OCI-LY7 (cell line): ENCODE measurements at regions of chr11 and their contacts with region 1.

Region 1: DNA sequence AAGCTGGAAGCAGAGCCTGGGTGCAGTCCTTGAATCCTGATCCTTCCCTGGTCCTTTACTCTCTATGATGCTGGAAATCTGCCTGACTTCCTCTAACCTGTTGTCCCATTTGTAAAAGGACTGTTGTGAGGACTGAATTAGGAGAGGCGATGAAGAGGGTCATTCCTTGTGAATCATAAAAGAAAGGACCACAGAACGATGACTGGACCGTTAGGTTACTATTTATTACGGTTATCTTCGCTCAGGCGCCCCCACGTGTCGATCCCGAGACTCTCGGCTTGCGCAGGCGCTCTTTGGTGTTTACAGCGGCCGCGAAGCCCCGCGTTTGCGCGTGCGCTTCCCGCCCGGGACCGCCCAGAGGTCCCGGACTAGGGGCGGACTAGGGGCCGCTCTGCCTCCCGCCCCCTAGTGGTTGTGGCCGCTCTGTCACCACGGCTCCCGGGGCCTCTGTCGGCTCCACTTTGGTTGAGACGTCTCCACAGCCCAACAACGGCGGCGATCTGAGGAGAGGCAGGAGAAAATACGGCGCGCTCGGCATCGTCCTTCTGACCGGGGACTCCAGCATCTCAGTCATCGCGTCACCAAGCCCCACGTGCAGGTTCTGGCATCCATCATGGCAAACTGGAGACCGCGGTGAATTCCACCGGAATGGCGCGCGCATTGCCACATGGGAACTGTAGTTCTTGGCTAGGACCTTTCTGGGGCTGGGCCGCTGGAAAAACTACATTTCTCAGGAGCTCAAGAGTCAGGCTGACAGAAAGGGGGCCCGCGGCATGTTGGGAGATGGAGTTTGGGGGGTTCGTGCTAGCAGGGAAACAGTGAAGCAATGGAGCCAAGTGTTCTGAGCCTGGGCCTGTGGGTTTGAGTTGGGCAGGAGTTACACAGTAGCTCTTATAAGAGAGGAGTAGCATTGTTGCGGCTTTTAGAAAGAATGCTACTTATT is at the start of gene STARD10:
- DNase-seq: peak; percentile 98
- H3K4me3 ChIP-seq: peak within 1 kb of the TSS; percentile 70
- H3K27ac ChIP-seq: peak within 1 kb of the TSS; percentile 68
- H3K4me1 ChIP-seq: peaks cover 30% of the 10 kb centered on the region
- CTCF ChIP-seq: peak; percentile 99
- total RNA-seq, gene STARD10: 8.1 and 12.9 TPM in 2 replicates

Region 2: GRCh38 chr11:72724851-72725730 is 68.6 kb before region 1 on chr11:
- CTCF ChIA-PET with region 1: interaction called, 6 read pairs
- POLR2A ChIA-PET with region 1: interaction called, 13 read pairs
- intact Hi-C with region 1: loop called (anchors 1 kb)
- DNase-seq: peak; percentile 90
- H3K4me3 ChIP-seq: no peak overlapping the region
- H3K27ac ChIP-seq: no peak overlapping the region
- H3K4me1 ChIP-seq: peaks cover 34% of the 10 kb centered on the region
- CTCF ChIP-seq: peak; percentile 97

Region 3: DNA sequence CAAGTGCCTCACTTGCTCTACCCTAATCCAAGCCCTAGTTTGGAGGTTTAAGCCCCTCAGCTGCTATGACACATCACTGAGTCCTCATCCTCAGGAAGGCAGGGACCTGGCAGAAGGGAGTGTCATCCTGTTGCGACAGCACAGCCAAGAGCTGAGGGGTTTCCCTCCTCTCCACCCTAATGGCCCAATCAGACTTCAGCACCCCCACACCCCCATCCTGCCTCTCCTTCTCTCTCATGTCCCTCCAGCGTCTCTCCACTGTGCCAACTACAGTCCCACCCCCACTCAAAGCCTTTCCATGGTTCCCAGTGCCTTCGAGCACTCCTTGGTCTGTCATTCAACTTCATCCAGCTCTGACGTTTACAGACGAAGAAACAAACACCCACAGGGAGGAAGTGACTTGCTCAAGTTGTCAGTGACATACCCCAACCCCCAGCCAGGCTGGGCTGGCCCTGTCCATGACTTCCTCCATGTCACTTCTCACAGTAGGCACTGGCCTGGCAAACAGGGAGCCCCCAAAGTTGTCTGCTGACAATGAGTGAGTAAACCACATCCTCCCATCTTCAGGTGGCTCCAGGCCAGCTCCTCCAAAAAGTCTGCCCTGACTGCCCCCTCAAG is 57.1 kb before region 1 on chr11:
- CTCF ChIA-PET with region 1: interaction called, 4 read pairs
- POLR2A ChIA-PET with region 1: interaction called, 13 read pairs
- intact Hi-C with region 1: no loop called
- DNase-seq: peak; percentile 69
- H3K4me3 ChIP-seq: peak overlapping the region; percentile 34
- H3K27ac ChIP-seq: peak overlapping the region; percentile 63
- H3K4me1 ChIP-seq: peaks cover 56% of the 10 kb centered on the region
- CTCF ChIP-seq: no peak

Region 4: DNA sequence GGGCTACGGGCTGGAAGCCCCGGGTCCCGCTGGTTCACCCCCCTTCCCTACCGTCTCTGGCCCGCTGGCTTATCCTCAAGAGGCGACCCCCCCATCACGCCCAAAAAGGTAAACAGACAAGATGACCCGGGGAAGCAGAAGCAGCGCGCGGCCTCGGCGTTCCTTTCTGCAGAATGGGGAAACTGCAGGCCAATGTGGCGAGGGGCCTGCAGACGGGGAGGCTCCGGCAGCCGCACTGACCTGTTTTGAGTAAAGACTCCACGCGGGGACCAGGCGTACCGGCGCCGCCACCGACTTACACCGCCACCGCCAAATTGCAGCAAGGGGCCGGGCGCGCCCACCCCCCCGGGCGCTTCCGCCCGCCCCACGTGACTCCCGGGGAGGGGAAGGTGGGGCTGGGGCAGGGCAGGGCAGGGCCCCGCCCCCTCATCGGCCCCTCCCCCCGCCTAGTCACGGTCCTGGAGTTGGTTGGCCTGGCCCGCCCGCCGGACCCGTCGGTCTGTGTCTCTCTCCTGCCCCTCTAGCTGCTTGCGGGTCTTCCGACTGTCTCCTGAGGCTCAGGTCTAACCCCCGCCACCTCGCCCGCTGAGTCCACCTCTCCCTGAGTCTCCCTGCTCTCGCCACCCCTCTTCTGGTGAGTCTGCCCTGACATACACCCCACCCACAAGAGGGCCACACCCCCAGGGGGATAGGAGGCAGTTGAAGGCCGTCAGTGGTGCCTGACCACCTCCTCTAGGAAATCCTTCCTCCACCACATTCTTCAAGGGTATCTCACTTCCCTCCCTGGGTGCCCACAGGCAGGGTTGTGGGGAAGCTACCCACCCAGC is 41.4 kb before region 1 on chr11 and contains the start of gene ARAP1:
- CTCF ChIA-PET with region 1: interaction called, 6 read pairs
- POLR2A ChIA-PET with region 1: interaction called, 4 read pairs
- intact Hi-C with region 1: loop called (anchors 2 kb)
- DNase-seq: peak; percentile 86
- H3K4me3 ChIP-seq: peak within 1 kb of the TSS; percentile 89
- H3K27ac ChIP-seq: peak within 1 kb of the TSS; percentile 47
- H3K4me1 ChIP-seq: peaks cover 25% of the 10 kb centered on the region
- CTCF ChIP-seq: 0 out of 2 replicates have a peak, but pooled peaks have one; percentile 29
- total RNA-seq, gene ARAP1: 61.3 and 65.6 TPM in 2 replicates

Region 5: GRCh38 chr11:72814286-72815109 is 20.8 kb after region 1 on chr11 and contains the start of gene ATG16L2:
- CTCF ChIA-PET with region 1: interaction called, 10 read pairs
- POLR2A ChIA-PET with region 1: interaction called, 5 read pairs
- intact Hi-C with region 1: loop called (anchors 2 kb)
- DNase-seq: peak; percentile 91
- H3K4me3 ChIP-seq: peak within 1 kb of the TSS; percentile 84
- H3K27ac ChIP-seq: peak within 1 kb of the TSS; percentile 91
- H3K4me1 ChIP-seq: peaks cover 27% of the 10 kb centered on the region
- CTCF ChIP-seq: peak; percentile 60
- total RNA-seq, gene ATG16L2: 99.1 and 103 TPM in 2 replicates